ENCODE measurements at regions of chr7 and their contacts with region 1.

Region 1: GRCh38 chr7:74083117-74083876 is at the start of gene LIMK1:
- DNase-seq: peak in 1 of 2 donors; percentile 90
- H3K4me3 ChIP-seq: peak within 1 kb of the TSS; percentile 71 to 99
- H3K27ac ChIP-seq: peak within 1 kb of the TSS; percentile 86
- H3K4me1 ChIP-seq: peaks cover 35% of the 10 kb centered on the region
- H3K27me3 ChIP-seq: no peaks in the 10 kb centered on the region
- CTCF ChIP-seq: no peak
- POLR2A ChIP-seq: peak in 1 of 2 donors; percentile 19
- total RNA-seq, gene LIMK1: 28.2 TPM

Region 2: GRCh38 chr7:74173866-74174605 is 90.7 kb after region 1 on chr7 and contains the start of gene EIF4H:
- intact Hi-C with region 1: loop called (anchors 10 kb)
- DNase-seq: peak; percentile 96
- H3K4me3 ChIP-seq: peak within 1 kb of the TSS; percentile 60 to 91
- H3K27ac ChIP-seq: peak within 1 kb of the TSS; percentile 96
- H3K4me1 ChIP-seq: peaks cover 58% of the 10 kb centered on the region
- H3K27me3 ChIP-seq: no peaks in the 10 kb centered on the region
- CTCF ChIP-seq: no peak
- POLR2A ChIP-seq: peak in 1 of 2 donors; percentile 82
- total RNA-seq, gene EIF4H: 139 TPM